Activated T-helper 2 cell treated with anti-CD3 and anti-CD28 coated beads, Interferon-gamma antibody, Interleukin-2, Interleukin-4, amounts not matched to agents 10 μg/mL and 5 μg/mL and 100 μg/mL, durations not matched to agents 14 hours and 24 hours and 36 hours (primary cell): ENCODE measurements at regions of chr11 and their contacts with region 1.

Region 1: GRCh38 chr11:7143908-7144307 is 55.1 kb downstream of the RBMXL2 start:
- DNase-seq: no peak
- H3K4me3 Mint-ChIP-seq: no peak overlapping the region
- H3K27ac Mint-ChIP-seq: no peak overlapping the region
- H3K4me1 Mint-ChIP-seq: no peaks in the 10 kb centered on the region
- H3K27me3 Mint-ChIP-seq: peaks cover 1% of the 10 kb centered on the region

Region 2: DNA sequence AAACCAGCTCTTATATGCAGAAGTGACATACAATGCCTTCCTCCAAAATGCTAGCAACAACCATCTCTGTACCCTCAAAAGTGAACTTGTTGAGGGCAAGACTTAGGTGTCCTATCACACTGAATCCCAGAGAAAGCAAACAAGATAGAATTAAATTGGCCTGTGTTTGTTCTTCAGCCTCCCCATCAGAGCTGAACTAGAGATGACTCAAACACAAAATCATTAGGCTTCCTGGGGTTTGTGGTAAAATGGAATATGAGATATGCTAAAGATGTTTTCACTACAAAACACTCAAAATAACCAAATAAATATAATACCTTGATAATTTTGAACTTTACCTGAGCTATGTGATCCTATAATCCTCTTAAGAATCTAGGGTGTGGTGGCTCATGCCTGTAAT is 155.4 kb before region 1 on chr11:
- intact Hi-C with region 1: no loop called
- DNase-seq: no peak
- H3K4me3 Mint-ChIP-seq: no peak overlapping the region
- H3K27ac Mint-ChIP-seq: no peak overlapping the region
- H3K4me1 Mint-ChIP-seq: no peaks in the 10 kb centered on the region
- H3K27me3 Mint-ChIP-seq: no peaks in the 10 kb centered on the region

Region 3: DNA sequence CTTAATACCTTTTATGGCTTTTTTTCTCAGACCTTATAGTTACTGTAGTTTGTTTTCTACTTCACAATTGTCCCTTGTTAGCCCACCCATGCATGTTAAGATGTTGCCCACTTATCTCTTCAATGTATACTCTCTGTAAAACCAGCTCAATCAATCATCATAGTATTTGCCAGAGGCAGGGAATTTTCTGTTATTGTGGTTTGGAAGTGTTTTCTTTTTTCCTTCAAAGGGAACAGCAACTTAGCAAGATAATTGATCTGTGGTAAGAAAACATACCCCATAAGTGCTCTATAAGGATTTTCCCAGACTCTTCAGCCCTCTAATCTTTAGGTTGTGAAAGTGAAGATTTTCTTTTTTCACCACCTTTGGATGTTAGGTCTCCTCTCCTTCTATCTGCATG is 31.1 kb after region 1 on chr11:
- intact Hi-C with region 1: no loop called
- DNase-seq: no peak
- H3K4me3 Mint-ChIP-seq: no peak overlapping the region
- H3K27ac Mint-ChIP-seq: no peak overlapping the region
- H3K4me1 Mint-ChIP-seq: no peaks in the 10 kb centered on the region
- H3K27me3 Mint-ChIP-seq: peaks cover 2% of the 10 kb centered on the region

Region 4: GRCh38 chr11:7186190-7186589 is 42.3 kb after region 1 on chr11:
- intact Hi-C with region 1: no loop called
- DNase-seq: no peak
- H3K4me3 Mint-ChIP-seq: no peak overlapping the region
- H3K27ac Mint-ChIP-seq: no peak overlapping the region
- H3K4me1 Mint-ChIP-seq: no peaks in the 10 kb centered on the region
- H3K27me3 Mint-ChIP-seq: no peaks in the 10 kb centered on the region

Region 5: DNA sequence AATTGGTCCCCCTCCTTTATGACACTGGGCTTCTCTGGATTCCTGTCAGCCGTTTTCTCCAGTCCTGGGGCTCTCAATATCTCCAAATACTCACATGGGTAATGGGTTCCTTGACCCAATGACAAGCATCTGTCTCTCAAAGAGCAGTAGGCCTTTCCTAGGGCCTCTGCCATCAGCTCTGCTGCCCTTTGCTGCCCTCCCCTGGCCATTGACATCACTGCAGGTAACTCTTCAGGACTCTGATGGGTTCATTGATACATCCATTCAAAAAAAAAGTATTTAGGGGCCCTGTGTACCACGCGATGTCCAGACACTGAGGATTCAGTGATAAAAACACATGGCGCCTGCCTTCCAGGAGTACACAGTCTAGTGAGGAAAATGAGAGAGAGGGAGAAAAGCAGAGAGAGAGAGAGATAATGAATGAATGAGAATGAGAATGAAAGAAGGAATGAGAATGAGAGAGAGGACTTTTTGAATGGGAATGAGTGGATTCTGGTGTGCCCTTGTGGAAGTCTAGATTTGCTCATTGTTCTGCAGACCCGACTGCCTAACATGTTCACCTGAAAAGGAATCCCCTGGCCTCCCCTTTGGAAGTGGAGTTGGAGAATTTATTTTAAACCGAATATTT is 298.8 kb after region 1 on chr11:
- intact Hi-C with region 1: loop called (anchors 1 kb)
- DNase-seq: peak; percentile 53
- H3K4me3 Mint-ChIP-seq: no peak overlapping the region
- H3K27ac Mint-ChIP-seq: no peak overlapping the region
- H3K4me1 Mint-ChIP-seq: no peaks in the 10 kb centered on the region
- H3K27me3 Mint-ChIP-seq: no peaks in the 10 kb centered on the region